IMR-90 (cell line): ENCODE measurements at regions of chr2 and their contacts with region 1.

Region 1: GRCh38 chr2:25817630-25818029 is 60.7 kb downstream of the ASXL2 start:
- DNase-seq: no peak
- ATAC-seq: no peak
- H3K4me3 ChIP-seq: no peak overlapping the region
- H3K27ac ChIP-seq: no peak overlapping the region
- H3K4me1 ChIP-seq: peaks cover 3% of the 10 kb centered on the region; the same call in 1 of the 2 replicates
- H3K27me3 ChIP-seq: no peaks in the 10 kb centered on the region
- CTCF ChIP-seq: no peak
- POLR2A ChIP-seq: no peak
- RAD21 ChIP-seq: no peak

Region 2: GRCh38 chr2:23944527-23944926 is 1873.1 kb before region 1 on chr2:
- CTCF ChIA-PET with region 1: no interaction called
- POLR2A ChIA-PET with region 1: no interaction called
- dilution Hi-C with region 1: no loop called
- in situ Hi-C with region 1: no loop called
- intact Hi-C with region 1: no loop called
- DNase-seq: no peak
- ATAC-seq: no peak
- H3K4me3 ChIP-seq: no peak overlapping the region
- H3K27ac ChIP-seq: peak overlapping the region; percentile 56; the same call in 1 of the 2 replicates
- H3K4me1 ChIP-seq: peaks cover 11% of the 10 kb centered on the region
- H3K27me3 ChIP-seq: no peaks in the 10 kb centered on the region
- CTCF ChIP-seq: no peak
- POLR2A ChIP-seq: no peak
- RAD21 ChIP-seq: no peak

Region 3: GRCh38 chr2:25673300-25674076 is 144.1 kb before region 1 on chr2 and contains the start of gene DTNB:
- CTCF ChIA-PET with region 1: no interaction called
- POLR2A ChIA-PET with region 1: no interaction called
- dilution Hi-C with region 1: no loop called
- in situ Hi-C with region 1: no loop called
- intact Hi-C with region 1: no loop called
- DNase-seq: peak; percentile 54
- ATAC-seq: peak; percentile 91
- H3K4me3 ChIP-seq: peak within 1 kb of the TSS; percentile 94
- H3K27ac ChIP-seq: peak within 1 kb of the TSS; percentile 18; the same call in 1 of the 2 replicates
- H3K4me1 ChIP-seq: peaks cover 3% of the 10 kb centered on the region
- H3K27me3 ChIP-seq: no peaks in the 10 kb centered on the region; the same call in none of the 2 replicates
- CTCF ChIP-seq: no peak
- POLR2A ChIP-seq: no peak
- RAD21 ChIP-seq: no peak
- total RNA-seq, gene DTNB: 3.6 and 3.8 TPM in 2 replicates

Region 4: DNA sequence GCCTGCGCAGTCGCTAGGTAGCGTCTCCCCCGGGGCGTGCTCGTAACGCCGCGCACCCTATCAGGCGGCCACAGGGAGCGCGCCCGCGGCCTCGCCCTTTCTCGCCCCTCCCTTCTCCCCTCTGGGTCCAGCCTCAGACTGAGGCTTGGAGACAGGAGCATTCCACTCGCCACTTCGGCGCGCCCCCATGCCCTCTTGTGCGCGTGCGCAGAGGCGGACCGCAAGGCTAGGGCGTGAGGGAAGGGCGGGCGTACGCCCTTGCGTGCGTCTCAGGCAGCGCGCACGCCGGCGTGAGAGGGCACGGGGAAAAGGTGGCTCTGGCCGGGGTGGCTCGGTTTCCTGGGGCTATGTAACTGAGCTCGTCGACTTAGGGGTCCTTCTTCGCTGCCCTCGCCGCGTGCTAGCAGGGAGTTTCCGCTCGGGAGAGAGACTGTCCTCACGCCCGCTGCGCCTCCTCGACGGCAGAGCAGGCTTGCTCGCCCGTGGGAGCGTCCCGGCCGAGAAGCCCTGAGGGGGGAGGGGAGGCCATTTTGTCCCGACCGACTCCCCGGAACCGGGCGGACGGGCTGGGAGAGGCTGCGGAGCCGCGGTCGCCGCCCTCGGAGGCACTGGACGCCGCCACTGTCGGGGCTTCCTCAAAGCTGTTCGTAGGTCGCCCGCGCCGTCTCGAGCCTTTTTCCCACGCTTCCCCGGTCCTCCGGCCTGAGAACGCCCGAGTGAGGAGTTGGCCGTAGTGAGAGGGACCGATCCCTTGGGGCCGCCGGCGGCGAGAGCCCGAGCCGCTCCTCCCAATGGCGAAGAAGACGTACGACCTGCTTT is 216.4 kb after region 1 on chr2 and contains the start of gene RAB10:
- CTCF ChIA-PET with region 1: no interaction called
- POLR2A ChIA-PET with region 1: no interaction called
- dilution Hi-C with region 1: no loop called
- in situ Hi-C with region 1: no loop called
- intact Hi-C with region 1: no loop called
- DNase-seq: peak; percentile 98
- ATAC-seq: peak; percentile 97
- H3K4me3 ChIP-seq: peak within 1 kb of the TSS; percentile 86
- H3K27ac ChIP-seq: peak within 1 kb of the TSS; percentile 91
- H3K4me1 ChIP-seq: no peaks in the 10 kb centered on the region
- H3K27me3 ChIP-seq: no peaks in the 10 kb centered on the region
- CTCF ChIP-seq: 0 out of 2 replicates have a peak, but pooled peaks have one; percentile 2
- POLR2A ChIP-seq: peak; percentile 90
- RAD21 ChIP-seq: no peak
- total RNA-seq, gene RAB10: 30.1 and 79.7 TPM in 2 replicates

Region 5: DNA sequence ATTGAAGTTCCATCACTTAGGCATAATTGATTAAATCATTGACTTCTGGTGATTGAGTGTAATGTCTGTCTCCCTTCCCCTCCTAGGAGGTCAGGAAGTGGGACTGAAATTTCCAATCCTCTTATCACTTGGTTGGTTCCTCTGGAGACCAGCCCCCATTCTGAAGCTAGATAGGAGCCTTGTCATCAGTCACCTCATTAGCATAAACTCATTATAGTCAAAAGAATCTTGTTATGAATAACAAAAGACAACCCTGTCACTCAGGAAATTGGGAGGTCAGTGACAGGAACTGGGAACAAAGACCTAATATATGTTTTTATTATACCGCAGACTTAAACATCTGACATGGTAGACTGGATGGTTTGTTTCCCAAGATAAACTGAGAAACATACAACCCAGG is 294.6 kb after region 1 on chr2:
- CTCF ChIA-PET with region 1: no interaction called
- POLR2A ChIA-PET with region 1: no interaction called
- dilution Hi-C with region 1: no loop called
- in situ Hi-C with region 1: no loop called
- intact Hi-C with region 1: no loop called
- DNase-seq: no peak
- ATAC-seq: no peak
- H3K4me3 ChIP-seq: no peak overlapping the region
- H3K27ac ChIP-seq: no peak overlapping the region
- H3K4me1 ChIP-seq: no peaks in the 10 kb centered on the region
- H3K27me3 ChIP-seq: no peaks in the 10 kb centered on the region
- CTCF ChIP-seq: no peak
- POLR2A ChIP-seq: no peak
- RAD21 ChIP-seq: no peak

Region 6: GRCh38 chr2:26164231-26164630 is 346.6 kb after region 1 on chr2:
- CTCF ChIA-PET with region 1: no interaction called
- POLR2A ChIA-PET with region 1: interaction called, 12 read pairs
- dilution Hi-C with region 1: no loop called
- in situ Hi-C with region 1: no loop called
- intact Hi-C with region 1: no loop called
- DNase-seq: no peak
- ATAC-seq: no peak
- H3K4me3 ChIP-seq: no peak overlapping the region
- H3K27ac ChIP-seq: no peak overlapping the region
- H3K4me1 ChIP-seq: no peaks in the 10 kb centered on the region
- H3K27me3 ChIP-seq: peaks cover 9% of the 10 kb centered on the region
- CTCF ChIP-seq: no peak
- POLR2A ChIP-seq: no peak
- RAD21 ChIP-seq: no peak